ENCODE measurements at regions of chr19 and their contacts with region 1.

Region 1: GRCh38 chr19:6577476-6578125 is 13.3 kb downstream of the CD70 start:
- DNase-seq: peak; percentile 54
- ATAC-seq: peak; percentile 90
- H3K4me3 Mint-ChIP-seq: peak overlapping the region; percentile 68
- H3K27ac Mint-ChIP-seq: no peak overlapping the region
- H3K4me1 Mint-ChIP-seq: peaks cover 6% of the 10 kb centered on the region
- H3K27me3 Mint-ChIP-seq: no peaks in the 10 kb centered on the region
- CTCF ChIP-seq: no peak

Region 2: DNA sequence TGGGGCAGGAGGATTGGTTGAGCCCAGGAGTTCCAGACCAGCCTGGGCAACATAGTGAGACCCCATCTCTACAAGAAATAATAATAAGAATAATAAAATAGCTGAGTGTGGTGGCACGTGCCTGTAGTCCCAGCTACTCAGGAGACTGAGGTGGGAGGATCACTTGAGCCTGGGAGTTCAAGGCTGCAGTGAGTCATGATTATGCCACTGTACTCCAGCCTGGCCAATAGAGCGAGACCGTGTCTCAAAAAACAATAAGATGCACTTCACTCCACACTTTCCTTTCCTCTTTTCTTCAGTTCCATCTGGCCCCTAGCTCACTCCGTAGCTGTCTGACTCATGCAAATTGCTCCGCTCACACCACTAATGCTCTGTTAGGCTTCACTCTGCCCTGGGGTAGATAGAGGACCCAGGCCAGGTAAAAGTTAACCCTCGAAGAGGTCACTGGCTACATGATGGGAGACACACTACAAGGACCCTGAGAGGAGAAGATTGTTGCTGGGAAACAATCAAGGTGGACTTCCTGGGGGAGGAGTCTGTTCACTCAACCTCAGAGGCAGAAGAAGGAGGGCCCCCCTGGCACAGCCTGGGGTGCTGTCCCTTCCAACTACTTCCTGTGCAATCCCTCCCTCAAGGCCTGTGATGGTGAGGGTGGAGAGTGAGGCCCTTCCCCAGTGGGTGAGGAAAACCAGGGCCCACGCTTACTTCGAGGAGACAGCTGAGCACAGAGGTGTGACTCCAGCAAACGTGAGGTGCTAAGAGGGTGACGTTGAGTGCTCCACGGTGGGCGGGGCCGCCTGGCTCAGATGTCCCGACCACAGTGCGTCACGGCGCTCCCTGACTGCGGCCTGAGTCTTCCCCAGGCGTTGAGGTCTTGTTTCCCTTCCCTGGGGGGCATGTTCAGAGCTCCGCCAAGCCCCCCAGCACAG is 55.6 kb before region 1 on chr19:
- CTCF ChIA-PET with region 1: no interaction called
- POLR2A ChIA-PET with region 1: interaction called, 26 read pairs
- intact Hi-C with region 1: loop called (anchors 1 kb)
- DNase-seq: peak; percentile 70
- ATAC-seq: peak; percentile 73
- H3K4me3 Mint-ChIP-seq: peak overlapping the region; percentile 75
- H3K27ac Mint-ChIP-seq: peak overlapping the region; percentile 99
- H3K4me1 Mint-ChIP-seq: peaks cover 55% of the 10 kb centered on the region
- H3K27me3 Mint-ChIP-seq: no peaks in the 10 kb centered on the region
- CTCF ChIP-seq: no peak

Region 3: GRCh38 chr19:6535558-6536137 is 42.0 kb before region 1 on chr19:
- CTCF ChIA-PET with region 1: no interaction called
- POLR2A ChIA-PET with region 1: interaction called, 12 read pairs
- intact Hi-C with region 1: no loop called
- DNase-seq: no peak
- ATAC-seq: no peak
- H3K4me3 Mint-ChIP-seq: peak overlapping the region; percentile 59
- H3K27ac Mint-ChIP-seq: peak overlapping the region; percentile 83
- H3K4me1 Mint-ChIP-seq: peaks cover 57% of the 10 kb centered on the region
- H3K27me3 Mint-ChIP-seq: peaks cover 5% of the 10 kb centered on the region
- CTCF ChIP-seq: no peak

Region 4: GRCh38 chr19:6602729-6603114 is 25.1 kb after region 1 on chr19:
- CTCF ChIA-PET with region 1: no interaction called
- POLR2A ChIA-PET with region 1: interaction called, 10 read pairs
- intact Hi-C with region 1: no loop called
- DNase-seq: no peak
- ATAC-seq: no peak
- H3K4me3 Mint-ChIP-seq: no peak overlapping the region
- H3K27ac Mint-ChIP-seq: peak overlapping the region; percentile 46
- H3K4me1 Mint-ChIP-seq: peaks cover 46% of the 10 kb centered on the region
- H3K27me3 Mint-ChIP-seq: no peaks in the 10 kb centered on the region
- CTCF ChIP-seq: no peak

Region 5: DNA sequence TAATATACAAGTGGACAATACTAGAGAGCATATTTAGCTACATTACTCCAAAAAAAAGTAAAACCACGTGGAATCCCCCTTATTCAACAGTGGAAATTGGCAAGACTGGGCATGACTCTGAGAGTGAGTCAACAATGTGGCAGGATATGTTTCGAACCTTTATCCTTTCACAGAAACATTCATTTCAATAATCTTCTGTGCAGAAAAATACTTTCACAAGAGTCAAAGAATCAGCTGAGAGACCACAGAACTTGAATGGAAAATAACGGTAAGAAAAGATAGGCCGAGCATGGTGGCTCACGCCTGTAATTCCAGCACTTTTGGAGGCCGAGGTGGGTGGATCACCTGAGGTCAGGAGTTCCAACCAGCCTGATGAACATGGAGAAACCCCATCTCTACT is 38.4 kb after region 1 on chr19:
- CTCF ChIA-PET with region 1: no interaction called
- POLR2A ChIA-PET with region 1: no interaction called
- intact Hi-C with region 1: no loop called
- DNase-seq: no peak
- ATAC-seq: no peak
- H3K4me3 Mint-ChIP-seq: no peak overlapping the region
- H3K27ac Mint-ChIP-seq: no peak overlapping the region
- H3K4me1 Mint-ChIP-seq: no peaks in the 10 kb centered on the region
- H3K27me3 Mint-ChIP-seq: peaks cover 35% of the 10 kb centered on the region
- CTCF ChIP-seq: no peak

Region 6: DNA sequence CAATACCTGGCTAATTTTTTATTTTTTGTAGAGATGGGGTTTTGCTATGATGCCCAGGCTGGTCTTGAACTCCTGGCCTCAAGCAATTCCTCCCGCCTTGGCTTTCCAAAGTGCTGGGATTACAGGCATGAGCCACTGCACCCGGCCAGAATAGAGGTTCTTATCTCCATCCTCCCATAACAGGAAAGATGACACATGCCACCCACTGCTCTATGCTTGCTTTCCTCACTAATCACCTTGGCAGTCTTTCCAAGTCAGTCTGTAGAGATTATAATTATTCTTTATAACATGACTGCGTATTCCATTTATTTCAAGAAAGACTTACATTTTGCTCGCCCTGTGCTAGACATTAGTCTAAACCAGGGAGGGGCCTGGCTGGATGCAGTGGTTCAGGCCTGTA is 201.6 kb after region 1 on chr19:
- CTCF ChIA-PET with region 1: no interaction called
- POLR2A ChIA-PET with region 1: no interaction called
- intact Hi-C with region 1: no loop called
- DNase-seq: no peak
- ATAC-seq: no peak
- H3K4me3 Mint-ChIP-seq: no peak overlapping the region
- H3K27ac Mint-ChIP-seq: peak overlapping the region; percentile 53
- H3K4me1 Mint-ChIP-seq: peaks cover 72% of the 10 kb centered on the region
- H3K27me3 Mint-ChIP-seq: no peaks in the 10 kb centered on the region
- CTCF ChIP-seq: no peak

Measured in activated B cell treated with CpG ODN at 0.5 μM for 24 hours (primary cell).